Activated CD8-positive, alpha-beta memory T cell treated with anti-CD3 and anti-CD28 coated beads, Interleukin-2, amount 10 ng/mL, durations not matched to agents 7 days and 5 days (primary cell): ENCODE measurements at regions of chr15 and their contacts with region 1.

Region 1: DNA sequence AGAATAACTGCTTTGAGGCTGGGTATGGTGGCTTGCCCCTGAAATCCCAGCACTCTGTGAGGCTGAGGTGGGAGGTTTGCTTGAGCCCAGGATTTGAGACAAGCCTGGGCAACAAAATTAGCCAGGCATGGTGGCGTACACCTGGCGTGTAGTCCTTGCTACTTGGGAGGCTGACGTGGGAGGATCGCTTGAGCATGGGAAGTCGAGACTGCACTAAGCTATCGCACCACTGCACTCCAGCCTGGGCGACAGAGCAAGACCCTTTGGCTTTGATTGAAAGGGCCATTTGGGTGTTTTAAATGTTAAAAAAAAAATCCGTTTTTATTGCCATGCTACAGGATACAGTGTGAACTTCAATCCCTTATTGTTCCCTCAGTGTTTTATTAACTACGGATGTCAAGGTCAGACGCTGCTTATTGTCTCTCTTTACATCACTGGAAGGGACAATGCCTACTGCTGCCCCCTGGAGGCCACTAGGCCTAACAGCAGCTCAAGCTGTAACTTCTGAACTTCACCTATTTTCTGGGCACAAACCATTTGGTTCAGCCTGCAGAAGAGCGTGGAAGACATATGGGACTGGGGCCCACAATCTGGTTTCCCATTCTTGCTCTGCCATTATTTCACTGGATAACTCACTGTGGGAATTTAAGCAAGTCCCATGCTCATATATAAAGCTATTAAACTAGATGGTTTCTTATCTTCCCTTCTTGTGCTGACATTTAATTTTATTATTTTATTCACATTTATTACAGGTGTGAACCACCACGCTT is 15.3 kb upstream of the IREB2 start:
- DNase-seq: peak; percentile 76
- ATAC-seq: peak; percentile 83
- H3K4me3 Mint-ChIP-seq: no peak overlapping the region
- H3K27ac Mint-ChIP-seq: no peak overlapping the region
- H3K4me1 Mint-ChIP-seq: peaks cover 20% of the 10 kb centered on the region
- H3K27me3 Mint-ChIP-seq: peaks cover 12% of the 10 kb centered on the region

Region 2: DNA sequence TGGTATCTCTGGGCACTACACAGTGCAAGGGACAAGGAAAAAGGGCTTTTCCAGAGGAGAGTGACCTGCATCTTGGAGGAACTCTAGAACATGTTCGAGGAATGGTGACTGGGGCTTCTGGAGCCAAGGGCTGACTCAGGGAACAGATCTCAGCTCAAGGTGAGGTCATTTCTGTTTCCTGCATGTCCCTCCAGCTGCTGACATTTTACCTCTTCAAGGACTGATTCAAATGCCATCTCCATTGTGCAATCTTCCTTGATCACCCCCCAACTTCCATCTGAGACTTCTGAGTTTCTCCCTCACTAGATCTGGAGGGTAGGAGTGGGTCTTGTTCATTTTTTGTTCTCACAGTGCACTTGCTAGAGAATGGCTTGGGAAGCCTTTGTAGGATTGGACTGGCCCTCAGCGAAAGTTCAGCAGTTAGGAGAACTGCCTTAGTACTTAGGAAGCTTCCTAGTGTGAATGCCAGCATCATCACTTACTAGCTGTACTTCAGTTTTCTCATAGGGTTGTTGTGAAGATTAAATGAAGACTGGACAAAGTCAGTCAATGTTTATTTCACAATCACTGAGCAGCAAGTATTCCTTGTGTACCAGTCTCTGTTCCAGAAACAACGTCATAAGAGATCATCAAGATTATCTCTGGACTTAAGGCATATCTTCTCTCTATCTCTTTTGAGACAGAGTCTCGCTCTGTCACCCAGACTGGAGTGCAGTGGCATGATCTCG is 276.2 kb before region 1 on chr15:
- CTCF ChIA-PET with region 1: no interaction called
- DNase-seq: no peak
- ATAC-seq: no peak
- H3K4me3 Mint-ChIP-seq: no peak overlapping the region
- H3K27ac Mint-ChIP-seq: no peak overlapping the region
- H3K4me1 Mint-ChIP-seq: peaks cover 33% of the 10 kb centered on the region
- H3K27me3 Mint-ChIP-seq: no peaks in the 10 kb centered on the region

Region 3: DNA sequence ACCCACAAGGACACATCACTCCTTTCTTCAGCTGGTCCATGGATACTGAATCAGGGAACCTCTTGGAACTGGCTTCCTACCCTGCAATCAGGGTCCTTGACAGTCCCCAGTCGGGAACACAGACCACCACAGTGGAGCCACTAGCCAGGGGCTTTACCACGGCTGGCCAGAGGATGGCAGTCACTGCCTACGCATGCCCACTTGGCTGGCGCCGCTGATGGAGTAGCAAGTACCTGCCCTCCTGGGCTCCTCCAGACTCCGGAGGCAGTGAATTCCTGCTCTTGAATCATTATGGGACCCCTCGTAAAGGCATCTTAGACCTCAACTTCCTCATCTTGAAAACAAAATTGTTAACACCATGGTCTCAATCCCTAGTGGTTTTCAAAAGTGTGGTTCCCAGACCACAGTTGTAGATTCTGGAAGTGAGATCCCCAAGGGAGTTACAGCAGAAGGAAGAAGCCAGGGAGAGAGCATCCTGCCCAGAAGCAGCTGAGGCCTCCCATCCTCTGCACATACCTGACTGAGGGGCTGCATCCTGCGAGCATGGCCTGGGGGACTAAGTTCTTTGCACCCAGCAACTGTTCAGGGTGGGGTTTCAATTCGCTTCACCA is 114.2 kb before region 1 on chr15:
- CTCF ChIA-PET with region 1: interaction called, 27 read pairs
- DNase-seq: peak; percentile 74
- ATAC-seq: peak; percentile 92
- H3K4me3 Mint-ChIP-seq: no peak overlapping the region
- H3K27ac Mint-ChIP-seq: no peak overlapping the region
- H3K4me1 Mint-ChIP-seq: no peaks in the 10 kb centered on the region
- H3K27me3 Mint-ChIP-seq: peaks cover 8% of the 10 kb centered on the region

Region 4: GRCh38 chr15:78374436-78375393 is 48.0 kb before region 1 on chr15:
- CTCF ChIA-PET with region 1: no interaction called
- DNase-seq: peak; percentile 61
- ATAC-seq: peak; percentile 86
- H3K4me3 Mint-ChIP-seq: no peak overlapping the region
- H3K27ac Mint-ChIP-seq: peak overlapping the region; percentile 25
- H3K4me1 Mint-ChIP-seq: peaks cover 9% of the 10 kb centered on the region
- H3K27me3 Mint-ChIP-seq: peaks cover 25% of the 10 kb centered on the region

Region 5: GRCh38 chr15:78407608-78408354 is 15.0 kb before region 1 on chr15:
- CTCF ChIA-PET with region 1: interaction called, 10 read pairs
- DNase-seq: no peak
- ATAC-seq: no peak
- H3K4me3 Mint-ChIP-seq: no peak overlapping the region
- H3K27ac Mint-ChIP-seq: no peak overlapping the region
- H3K4me1 Mint-ChIP-seq: no peaks in the 10 kb centered on the region
- H3K27me3 Mint-ChIP-seq: peaks cover 18% of the 10 kb centered on the region

Region 6: GRCh38 chr15:78437762-78438302 is 15.1 kb after region 1 on chr15 and contains the start of gene IREB2:
- CTCF ChIA-PET with region 1: interaction called, 34 read pairs
- DNase-seq: peak; percentile 98
- ATAC-seq: peak; percentile 89
- H3K4me3 Mint-ChIP-seq: peak within 1 kb of the TSS; percentile 86
- H3K27ac Mint-ChIP-seq: peak within 1 kb of the TSS; percentile 90
- H3K4me1 Mint-ChIP-seq: peaks cover 49% of the 10 kb centered on the region
- H3K27me3 Mint-ChIP-seq: no peaks in the 10 kb centered on the region
- total RNA-seq, gene IREB2: 60.0 to 72.0 TPM